ENCODE measurements at regions of chr3 and their contacts with region 1.

Region 1: GRCh38 chr3:49839193-49839809 is 17.1 kb downstream of the TRAIP start:
- DNase-seq: peak in 1 of 2 experiments; percentile 59
- H3K4me3 ChIP-seq: no peak overlapping the region
- H3K27ac ChIP-seq: no peak overlapping the region
- H3K4me1 ChIP-seq: no peaks in the 10 kb centered on the region
- H3K27me3 ChIP-seq: no peaks in the 10 kb centered on the region
- CTCF ChIP-seq: peak; percentile 80

Region 2: DNA sequence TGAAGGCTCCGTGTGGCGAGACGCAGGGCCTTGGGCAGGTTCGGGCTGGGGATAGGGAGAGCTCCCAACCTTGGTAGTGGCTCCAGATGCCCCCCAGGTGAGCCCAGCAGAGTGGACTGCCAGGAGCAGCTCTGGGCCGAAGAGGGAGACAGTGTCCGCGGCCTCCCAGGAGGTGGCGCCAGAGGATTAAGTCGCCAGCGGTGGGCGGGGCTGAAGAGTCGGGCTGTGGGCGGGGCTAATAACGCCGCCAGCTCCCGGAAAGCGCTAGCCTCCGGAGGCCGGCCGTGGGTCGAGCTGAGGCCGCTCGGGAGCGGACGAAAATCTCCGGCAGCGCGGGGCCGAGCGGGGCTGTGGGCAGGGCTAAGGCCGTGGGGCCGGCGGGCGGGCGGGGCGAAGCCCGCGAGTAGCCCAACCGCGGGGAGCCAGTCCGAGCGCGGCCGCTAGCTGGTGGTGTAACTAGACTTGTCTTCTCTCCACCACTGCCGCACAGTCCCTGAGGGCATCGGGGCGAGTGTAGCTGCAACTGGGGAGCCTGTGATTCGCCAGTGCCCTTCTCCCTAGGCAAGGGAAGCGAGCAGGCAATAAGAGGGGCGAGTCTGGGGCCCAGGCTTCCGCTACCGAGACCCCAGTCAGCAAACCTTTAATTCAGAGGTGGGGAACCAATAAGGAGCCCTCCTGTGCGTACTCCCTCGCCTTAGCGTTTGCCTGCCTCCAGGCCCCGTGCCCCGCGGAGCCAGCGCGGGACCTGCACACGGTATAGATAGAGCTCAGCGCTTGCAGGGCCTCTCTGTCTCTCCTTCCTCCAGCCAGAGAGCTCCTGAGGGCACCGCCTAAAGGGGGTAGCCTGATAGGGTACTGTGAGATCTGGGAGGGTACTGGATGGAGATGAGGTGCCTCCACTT is 299.4 kb before region 1 on chr3:
- CTCF ChIA-PET with region 1: interaction called, 3 read pairs
- POLR2A ChIA-PET with region 1: no interaction called
- intact Hi-C with region 1: loop called (anchors 1 kb)
- DNase-seq: peak; percentile 75 to 96
- H3K4me3 ChIP-seq: peak overlapping the region; percentile 54; the same call in 1 of the 2 replicates
- H3K27ac ChIP-seq: no peak overlapping the region
- H3K4me1 ChIP-seq: no peaks in the 10 kb centered on the region
- H3K27me3 ChIP-seq: peaks cover 23% of the 10 kb centered on the region; the same call in 1 of the 2 replicates
- CTCF ChIP-seq: peak; percentile 89

Region 3: DNA sequence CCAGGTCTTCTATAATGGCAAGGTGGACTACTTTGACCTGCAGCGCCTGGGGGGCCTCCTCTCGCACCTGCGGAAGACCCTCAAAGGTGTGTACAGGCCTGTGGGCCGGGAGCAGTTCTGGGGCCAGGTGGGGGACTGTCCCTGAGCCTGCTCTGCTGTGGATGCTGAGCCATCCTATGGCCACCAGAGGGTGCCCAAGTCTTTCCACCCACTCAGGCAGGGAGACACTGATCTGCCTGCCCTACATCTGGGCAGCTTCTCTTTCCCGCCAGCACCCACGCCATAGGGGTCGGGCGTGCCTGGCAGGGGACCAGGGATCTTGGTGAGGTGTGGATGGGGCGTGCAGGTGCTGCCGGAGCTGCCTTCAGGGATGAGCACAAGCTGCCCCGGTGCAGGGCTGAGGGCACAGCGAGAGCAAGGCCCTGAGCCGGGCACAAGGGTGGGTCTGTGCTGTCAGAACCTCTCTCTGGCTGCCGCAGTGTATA is 135.8 kb before region 1 on chr3:
- CTCF ChIA-PET with region 1: interaction called, 5 read pairs
- POLR2A ChIA-PET with region 1: no interaction called
- intact Hi-C with region 1: loop called (anchors 1 kb)
- DNase-seq: peak in 1 of 2 experiments; percentile 77
- H3K4me3 ChIP-seq: no peak overlapping the region
- H3K27ac ChIP-seq: no peak overlapping the region
- H3K4me1 ChIP-seq: no peaks in the 10 kb centered on the region
- H3K27me3 ChIP-seq: no peaks in the 10 kb centered on the region
- CTCF ChIP-seq: peak; percentile 75

Region 4: GRCh38 chr3:49775538-49775937 is 63.8 kb before region 1 on chr3:
- CTCF ChIA-PET with region 1: no interaction called
- POLR2A ChIA-PET with region 1: no interaction called
- intact Hi-C with region 1: no loop called
- DNase-seq: no peak
- H3K4me3 ChIP-seq: no peak overlapping the region
- H3K27ac ChIP-seq: no peak overlapping the region
- H3K4me1 ChIP-seq: no peaks in the 10 kb centered on the region
- H3K27me3 ChIP-seq: no peaks in the 10 kb centered on the region
- CTCF ChIP-seq: no peak

Region 5: GRCh38 chr3:49813497-49814174 is 25.7 kb before region 1 on chr3 and contains the start of gene UBA7:
- CTCF ChIA-PET with region 1: interaction called, 26 read pairs
- POLR2A ChIA-PET with region 1: no interaction called
- intact Hi-C with region 1: no loop called
- DNase-seq: peak in 1 of 2 experiments; percentile 49
- H3K4me3 ChIP-seq: no peak within 1 kb of the TSS; the same call in 1 of the 2 replicates
- H3K27ac ChIP-seq: no peak within 1 kb of the TSS
- H3K4me1 ChIP-seq: no peaks in the 10 kb centered on the region
- H3K27me3 ChIP-seq: no peaks in the 10 kb centered on the region
- CTCF ChIP-seq: no peak
- total RNA-seq, gene UBA7: 48.6 and 56.5 TPM in 2 replicates

Measured in PC-9 (cell line).